IMR-90 (cell line): ENCODE measurements at regions of chr22 and their contacts with region 1.

Region 1: DNA sequence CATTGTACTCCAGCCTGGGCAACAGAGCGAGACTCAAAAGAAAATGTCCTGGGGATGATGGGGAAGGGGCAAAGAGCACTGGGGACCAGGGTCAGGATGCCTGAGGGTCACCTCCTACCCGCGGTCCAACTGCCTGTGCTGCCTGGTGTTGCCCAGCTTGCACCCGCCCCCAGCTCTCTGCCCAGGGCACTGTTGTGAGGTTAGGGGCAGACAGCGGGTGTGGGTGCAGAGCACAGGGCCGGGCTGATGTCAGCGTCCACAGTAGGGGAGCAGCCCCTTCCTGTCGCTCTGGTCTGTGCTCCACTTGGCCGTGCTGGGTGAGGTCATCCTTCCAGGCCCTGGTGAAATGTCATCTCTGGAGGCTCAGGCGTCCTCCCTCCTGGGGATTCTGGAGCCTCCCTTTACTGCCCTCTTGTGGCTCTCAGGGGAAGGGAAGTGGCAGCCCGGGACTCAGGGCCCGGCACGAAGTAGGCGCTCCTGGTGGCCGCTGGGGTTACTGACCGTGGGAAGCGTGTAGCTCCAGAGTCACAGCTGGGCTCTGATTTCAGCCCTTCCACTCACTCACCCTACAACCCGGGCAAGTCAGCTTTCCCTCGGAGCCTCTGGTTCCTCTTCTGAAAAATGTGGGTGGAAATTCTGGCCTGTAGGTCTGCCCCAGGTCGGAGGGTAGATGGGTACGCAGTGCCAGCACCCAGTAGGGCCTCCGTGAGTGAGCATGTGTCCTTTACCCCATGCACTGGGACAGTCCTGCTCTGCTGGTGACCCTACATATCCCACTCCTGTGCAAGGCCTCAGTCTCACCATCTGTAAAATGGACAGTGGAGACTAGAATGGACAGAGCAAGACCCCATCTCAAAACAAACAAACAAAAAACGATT is 17.3 kb upstream of the PRR5 start:
- DNase-seq: peak; percentile 95
- ATAC-seq: peak; percentile 90
- H3K4me3 ChIP-seq: no peak overlapping the region
- H3K27ac ChIP-seq: peak overlapping the region; percentile 51; the same call in 1 of the 2 replicates
- H3K4me1 ChIP-seq: peaks cover 25% of the 10 kb centered on the region
- H3K27me3 ChIP-seq: no peaks in the 10 kb centered on the region
- CTCF ChIP-seq: peak; percentile 100
- POLR2A ChIP-seq: no peak; the same call in 1 of the 2 replicates
- RAD21 ChIP-seq: peak; percentile 84

Region 2: GRCh38 chr22:43992331-43992821 is 692.4 kb before region 1 on chr22:
- CTCF ChIA-PET with region 1: no interaction called
- POLR2A ChIA-PET with region 1: no interaction called
- dilution Hi-C with region 1: no loop called
- in situ Hi-C with region 1: no loop called
- intact Hi-C with region 1: no loop called
- DNase-seq: peak; percentile 78
- ATAC-seq: peak; percentile 71
- H3K4me3 ChIP-seq: no peak overlapping the region
- H3K27ac ChIP-seq: no peak overlapping the region
- H3K4me1 ChIP-seq: peaks cover 7% of the 10 kb centered on the region; the same call in 1 of the 2 replicates
- H3K27me3 ChIP-seq: no peaks in the 10 kb centered on the region
- CTCF ChIP-seq: no peak
- POLR2A ChIP-seq: no peak
- RAD21 ChIP-seq: no peak

Region 3: DNA sequence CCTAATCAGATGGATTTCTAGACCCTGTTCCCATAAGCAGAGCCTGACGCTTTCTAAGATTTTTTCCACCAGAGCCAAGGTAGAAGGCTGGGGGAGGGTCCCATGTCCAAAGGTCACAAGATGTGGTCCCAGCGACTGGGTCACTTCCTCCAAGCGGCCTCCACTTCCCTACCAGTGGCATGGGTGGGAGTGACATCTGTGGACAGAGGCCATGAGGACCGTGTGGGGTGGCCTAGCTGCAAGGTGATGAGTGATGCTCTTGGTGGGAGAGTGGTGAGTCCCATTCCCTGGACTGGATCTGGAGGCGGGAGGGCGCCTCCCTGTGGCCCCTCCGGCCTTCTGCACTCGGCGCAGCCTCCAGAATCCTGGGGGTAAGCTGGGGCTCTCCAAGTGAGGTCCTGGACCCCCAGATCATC is 15.2 kb before region 1 on chr22:
- CTCF ChIA-PET with region 1: interaction called, 10 read pairs
- POLR2A ChIA-PET with region 1: no interaction called
- dilution Hi-C with region 1: no loop called
- in situ Hi-C with region 1: no loop called
- intact Hi-C with region 1: no loop called
- DNase-seq: peak; percentile 37
- ATAC-seq: peak; percentile 28
- H3K4me3 ChIP-seq: peak overlapping the region; percentile 75
- H3K27ac ChIP-seq: no peak overlapping the region
- H3K4me1 ChIP-seq: peaks cover 16% of the 10 kb centered on the region; the same call in 1 of the 2 replicates
- H3K27me3 ChIP-seq: no peaks in the 10 kb centered on the region; the same call in 1 of the 2 replicates
- CTCF ChIP-seq: peak; percentile 54
- POLR2A ChIP-seq: no peak
- RAD21 ChIP-seq: peak; percentile 51